Esophagus squamous epithelium (tissue), 5 donors: ENCODE measurements at regions of chr5 and their contacts with region 1.

Region 1: GRCh38 chr5:122192497-122193496 is 63.5 kb downstream of the ZNF474 start:
- DNase-seq: no peak
- H3K4me3 ChIP-seq: no peak overlapping the region
- H3K27ac ChIP-seq: no peak overlapping the region
- H3K4me1 ChIP-seq: peaks cover 0 to 8% (median 0%) of the 10 kb centered on the region in 3 donors
- H3K27me3 ChIP-seq: no peaks in the 10 kb centered on the region
- CTCF ChIP-seq: peak; percentile 24 to 78 (median 58)
- POLR2A ChIP-seq: no peak

Region 2: DNA sequence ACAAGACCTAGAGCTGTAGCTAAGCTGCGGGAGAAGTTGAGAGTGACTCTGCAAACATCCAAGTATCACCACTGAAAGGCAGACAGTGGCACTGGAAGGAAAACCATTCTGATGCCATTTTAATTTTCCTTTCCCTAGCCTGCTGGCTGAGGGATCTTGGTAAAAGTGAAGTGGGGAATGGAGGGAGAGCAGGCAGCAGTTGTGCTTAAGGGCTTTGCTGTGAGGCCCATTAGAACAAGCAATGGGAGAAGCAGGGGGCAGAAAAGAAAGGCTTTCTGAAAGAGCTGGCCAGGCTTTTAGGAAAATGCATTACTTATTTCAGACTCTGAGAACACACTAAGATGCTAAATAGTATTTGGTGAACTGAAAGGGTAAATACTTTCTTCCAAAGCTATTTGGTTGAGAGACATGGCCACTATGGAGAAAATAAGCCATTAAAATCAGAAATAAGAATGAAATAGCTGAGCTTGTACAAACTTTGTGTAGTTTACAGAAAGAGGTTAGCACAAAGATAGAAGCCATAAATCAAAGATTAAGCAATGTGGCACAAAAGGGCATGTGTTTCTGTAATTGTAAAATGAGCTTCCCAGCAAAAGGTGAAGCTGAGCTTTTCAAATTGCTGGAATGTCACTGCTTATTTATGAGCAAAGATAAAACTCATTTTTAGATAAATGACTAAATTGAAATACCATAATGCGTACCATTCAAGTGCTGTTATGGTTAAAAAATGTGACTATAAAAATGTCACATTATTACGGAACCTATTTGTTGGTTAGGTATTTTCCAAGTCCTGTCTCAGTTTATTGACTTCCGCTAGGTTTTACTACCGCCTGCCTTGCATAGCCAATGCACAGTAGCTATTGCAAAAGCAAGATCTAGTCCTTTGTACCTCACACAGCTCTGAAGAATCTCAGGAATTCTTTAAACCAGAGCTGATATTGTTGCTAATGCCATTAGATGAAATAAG is 140.1 kb after region 1 on chr5:
- intact Hi-C with region 1: no loop called
- DNase-seq: no peak
- H3K4me3 ChIP-seq: no peak overlapping the region
- H3K27ac ChIP-seq: no peak overlapping the region
- H3K4me1 ChIP-seq: no peaks in the 10 kb centered on the region
- H3K27me3 ChIP-seq: no peaks in the 10 kb centered on the region
- CTCF ChIP-seq: no peak
- POLR2A ChIP-seq: no peak

Region 3: GRCh38 chr5:122415030-122415800 is 222.4 kb after region 1 on chr5:
- intact Hi-C with region 1: loop called (anchors 5 kb)
- DNase-seq: no peak
- H3K4me3 ChIP-seq: no peak overlapping the region
- H3K27ac ChIP-seq: no peak overlapping the region
- H3K4me1 ChIP-seq: no peaks in the 10 kb centered on the region
- H3K27me3 ChIP-seq: no peaks in the 10 kb centered on the region
- CTCF ChIP-seq: peak in 5 of 6 experiments; percentile 45 to 75 (median 54)
- POLR2A ChIP-seq: no peak

Region 4: DNA sequence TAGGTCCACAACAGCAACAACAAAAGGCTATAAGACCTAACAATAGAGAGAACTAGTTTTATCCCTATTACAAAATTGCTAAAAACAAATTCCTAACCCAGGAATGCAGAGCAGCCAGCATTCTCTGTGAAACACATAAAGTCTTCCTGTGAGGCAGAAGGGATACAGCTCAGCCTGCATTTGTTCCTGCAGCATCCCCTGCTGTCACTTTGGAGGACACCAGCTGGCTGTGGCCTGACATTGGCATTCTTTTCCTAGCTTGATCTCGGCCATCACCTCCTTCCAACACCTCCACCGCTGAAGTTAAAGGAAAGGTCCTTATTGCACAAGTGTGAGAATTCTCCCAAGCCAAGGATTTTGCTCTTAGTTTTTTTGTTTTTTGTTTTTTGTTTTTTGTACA is 305.4 kb after region 1 on chr5:
- intact Hi-C with region 1: loop called (anchors 10 kb)
- DNase-seq: no peak
- H3K4me3 ChIP-seq: no peak overlapping the region
- H3K27ac ChIP-seq: no peak overlapping the region
- H3K4me1 ChIP-seq: peaks cover 0 to 33% (median 18%) of the 10 kb centered on the region in 3 donors
- H3K27me3 ChIP-seq: no peaks in the 10 kb centered on the region
- CTCF ChIP-seq: peak in 1 of 6 experiments; percentile 26
- POLR2A ChIP-seq: no peak